GM12878 (cell line): ENCODE measurements at regions of chr13 and their contacts with region 1.

Region 1: GRCh38 chr13:99606324-99607066 is 105.2 kb downstream of the TM9SF2 start:
- DNase-seq: no peak
- ATAC-seq: peak; percentile 94
- H3K4me3 ChIP-seq: peak within 1 kb of the TSS; percentile 92
- H3K27ac ChIP-seq: peak within 1 kb of the TSS; percentile 83
- H3K4me1 ChIP-seq: peaks cover 7% of the 10 kb centered on the region
- H3K27me3 ChIP-seq: no peaks in the 10 kb centered on the region
- CTCF ChIP-seq: no peak
- EP300 ChIP-seq: no peak
- POLR2A ChIP-seq: peak; percentile 94
- RAD21 ChIP-seq: no peak

Region 2: GRCh38 chr13:99542788-99543406 is 63.6 kb before region 1 on chr13:
- CTCF ChIA-PET with region 1: no interaction called
- POLR2A ChIA-PET with region 1: interaction called, 4 read pairs
- RAD21 ChIA-PET with region 1: no interaction called
- SMC1A ChIA-PET with region 1: no interaction called
- in situ Hi-C with region 1: no loop called
- intact Hi-C with region 1: loop called (anchors 5 kb)
- DNase-seq: peak; percentile 92
- ATAC-seq: peak; percentile 99
- H3K4me3 ChIP-seq: no peak overlapping the region; the same call in 1 of the 2 replicates
- H3K27ac ChIP-seq: peak overlapping the region; percentile 49
- H3K4me1 ChIP-seq: peaks cover 51% of the 10 kb centered on the region
- H3K27me3 ChIP-seq: no peaks in the 10 kb centered on the region
- CTCF ChIP-seq: no peak
- EP300 ChIP-seq: peak; percentile 80 to 97
- POLR2A ChIP-seq: peak; percentile 50; the same call in 1 of the 2 replicates
- RAD21 ChIP-seq: no peak

Region 3: GRCh38 chr13:99566125-99567083 is 40.1 kb before region 1 on chr13:
- CTCF ChIA-PET with region 1: no interaction called
- POLR2A ChIA-PET with region 1: no interaction called
- RAD21 ChIA-PET with region 1: no interaction called
- SMC1A ChIA-PET with region 1: no interaction called
- in situ Hi-C with region 1: no loop called
- intact Hi-C with region 1: no loop called
- DNase-seq: no peak
- ATAC-seq: no peak
- H3K4me3 ChIP-seq: no peak overlapping the region
- H3K27ac ChIP-seq: no peak overlapping the region
- H3K4me1 ChIP-seq: no peaks in the 10 kb centered on the region
- H3K27me3 ChIP-seq: no peaks in the 10 kb centered on the region
- CTCF ChIP-seq: no peak
- EP300 ChIP-seq: no peak
- POLR2A ChIP-seq: peak; percentile 37; the same call in 1 of the 2 replicates
- RAD21 ChIP-seq: no peak